Activated B cell treated with CpG ODN at 0.5 μM for 24 hours (primary cell): ENCODE measurements at regions of chr7 and their contacts with region 1.

Region 1: DNA sequence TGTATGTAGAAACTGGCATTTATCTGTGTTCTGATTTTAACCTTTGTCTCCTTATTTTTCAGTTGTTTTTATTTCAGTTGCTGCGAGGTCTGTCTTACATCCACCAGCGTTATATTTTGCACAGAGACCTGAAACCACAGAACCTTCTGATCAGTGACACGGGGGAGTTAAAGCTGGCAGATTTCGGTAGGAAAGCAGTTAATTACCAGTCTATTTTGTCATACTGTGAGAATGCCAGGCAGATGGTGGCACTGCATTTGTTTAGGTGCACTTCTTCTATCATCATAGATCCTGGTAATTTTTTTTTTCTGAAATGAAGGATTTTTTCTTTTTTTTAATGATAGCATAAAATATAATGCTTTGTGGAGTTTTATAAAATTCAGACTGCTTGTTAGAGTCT is 321.4 kb downstream of the CDK14 start:
- DNase-seq: no peak
- ATAC-seq: no peak
- H3K4me3 Mint-ChIP-seq: no peak overlapping the region
- H3K27ac Mint-ChIP-seq: no peak overlapping the region
- H3K4me1 Mint-ChIP-seq: no peaks in the 10 kb centered on the region
- H3K27me3 Mint-ChIP-seq: no peaks in the 10 kb centered on the region
- CTCF ChIP-seq: no peak

Region 2: GRCh38 chr7:90900628-90901356 is 16.7 kb before region 1 on chr7:
- CTCF ChIA-PET with region 1: no interaction called
- POLR2A ChIA-PET with region 1: no interaction called
- intact Hi-C with region 1: loop called (anchors 2 kb)
- DNase-seq: no peak
- ATAC-seq: no peak
- H3K4me3 Mint-ChIP-seq: no peak overlapping the region
- H3K27ac Mint-ChIP-seq: no peak overlapping the region
- H3K4me1 Mint-ChIP-seq: peaks cover 7% of the 10 kb centered on the region
- H3K27me3 Mint-ChIP-seq: no peaks in the 10 kb centered on the region
- CTCF ChIP-seq: no peak

Region 3: DNA sequence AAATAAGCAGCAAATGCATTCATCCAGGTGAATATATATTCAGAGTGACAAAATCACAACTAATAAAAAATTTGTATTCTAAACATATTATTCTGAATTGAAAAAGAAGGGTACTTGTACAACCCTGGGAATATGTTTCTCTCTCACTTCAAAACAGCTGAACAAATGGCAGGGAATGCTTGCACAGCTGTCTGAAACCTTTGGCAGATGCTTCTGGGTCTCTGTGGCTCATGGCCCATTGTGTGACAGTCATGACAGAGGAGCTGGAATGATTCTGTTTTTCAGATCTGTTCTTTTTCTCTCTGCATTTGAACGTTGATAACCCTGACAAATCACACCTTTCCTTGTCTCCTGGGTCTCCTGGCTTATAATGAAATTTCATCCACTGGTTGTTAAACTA is 71.0 kb after region 1 on chr7:
- CTCF ChIA-PET with region 1: no interaction called
- POLR2A ChIA-PET with region 1: no interaction called
- intact Hi-C with region 1: no loop called
- DNase-seq: no peak
- ATAC-seq: no peak
- H3K4me3 Mint-ChIP-seq: no peak overlapping the region
- H3K27ac Mint-ChIP-seq: no peak overlapping the region
- H3K4me1 Mint-ChIP-seq: no peaks in the 10 kb centered on the region
- H3K27me3 Mint-ChIP-seq: no peaks in the 10 kb centered on the region
- CTCF ChIP-seq: no peak